Activated T-helper 2 cell treated with anti-CD3 and anti-CD28 coated beads, Interferon-gamma antibody, Interleukin-2, Interleukin-4, amounts not matched to agents 10 μg/mL and 5 μg/mL and 100 μg/mL, durations not matched to agents 14 hours and 24 hours and 36 hours (primary cell): ENCODE measurements at regions of chr2 and their contacts with region 1.

Region 1: DNA sequence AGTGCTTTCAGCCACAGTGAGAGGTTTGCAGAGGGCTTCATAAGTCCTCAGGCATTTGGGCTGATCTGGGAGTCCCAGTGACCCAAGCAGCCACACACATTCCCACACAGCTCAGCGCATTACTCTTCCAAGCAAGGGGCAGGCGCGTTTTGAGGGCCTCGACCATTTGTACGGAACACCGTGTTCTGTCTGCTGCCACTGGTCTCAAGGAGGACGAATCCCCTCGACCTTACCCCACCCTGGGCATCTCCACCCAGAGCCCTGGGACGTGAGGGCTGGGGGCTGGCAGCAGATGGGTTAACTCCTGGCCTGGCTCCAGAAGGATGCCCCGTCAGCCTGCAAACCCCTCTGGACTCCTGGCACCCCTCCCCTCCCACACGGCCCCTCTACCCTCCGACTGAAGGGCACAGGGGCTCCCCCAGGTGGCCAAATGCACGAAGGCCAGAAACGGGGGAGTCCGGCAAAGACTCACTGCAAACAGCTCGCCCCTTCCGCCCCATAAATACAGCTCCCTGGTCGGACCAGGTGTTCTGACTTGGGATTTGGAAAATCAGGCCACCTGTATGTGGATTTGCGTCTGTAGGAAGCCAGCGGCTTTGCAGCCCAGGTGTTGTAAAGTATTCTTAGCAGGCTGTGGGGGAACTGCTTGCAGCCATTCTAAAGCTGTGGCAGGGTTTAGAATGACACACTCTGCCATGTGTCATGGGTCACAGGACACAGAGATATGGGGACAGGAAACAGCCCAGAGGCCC is 33.6 kb upstream of the PTMA start:
- DNase-seq: peak; percentile 52
- H3K4me3 Mint-ChIP-seq: no peak overlapping the region
- H3K27ac Mint-ChIP-seq: peak overlapping the region; percentile 65
- H3K4me1 Mint-ChIP-seq: peaks cover 16% of the 10 kb centered on the region
- H3K27me3 Mint-ChIP-seq: no peaks in the 10 kb centered on the region

Region 2: GRCh38 chr2:231642631-231643494 is 31.9 kb before region 1 on chr2:
- intact Hi-C with region 1: loop called (anchors 2 kb)
- DNase-seq: peak; percentile 68
- H3K4me3 Mint-ChIP-seq: peak overlapping the region; percentile 68
- H3K27ac Mint-ChIP-seq: peak overlapping the region; percentile 91
- H3K4me1 Mint-ChIP-seq: peaks cover 14% of the 10 kb centered on the region
- H3K27me3 Mint-ChIP-seq: no peaks in the 10 kb centered on the region

Region 3: GRCh38 chr2:231715258-231715997 is 40.7 kb after region 1 on chr2:
- intact Hi-C with region 1: loop called (anchors 1 kb)
- DNase-seq: peak; percentile 70
- H3K4me3 Mint-ChIP-seq: no peak overlapping the region
- H3K27ac Mint-ChIP-seq: peak overlapping the region; percentile 95
- H3K4me1 Mint-ChIP-seq: peaks cover 34% of the 10 kb centered on the region
- H3K27me3 Mint-ChIP-seq: no peaks in the 10 kb centered on the region

Region 4: DNA sequence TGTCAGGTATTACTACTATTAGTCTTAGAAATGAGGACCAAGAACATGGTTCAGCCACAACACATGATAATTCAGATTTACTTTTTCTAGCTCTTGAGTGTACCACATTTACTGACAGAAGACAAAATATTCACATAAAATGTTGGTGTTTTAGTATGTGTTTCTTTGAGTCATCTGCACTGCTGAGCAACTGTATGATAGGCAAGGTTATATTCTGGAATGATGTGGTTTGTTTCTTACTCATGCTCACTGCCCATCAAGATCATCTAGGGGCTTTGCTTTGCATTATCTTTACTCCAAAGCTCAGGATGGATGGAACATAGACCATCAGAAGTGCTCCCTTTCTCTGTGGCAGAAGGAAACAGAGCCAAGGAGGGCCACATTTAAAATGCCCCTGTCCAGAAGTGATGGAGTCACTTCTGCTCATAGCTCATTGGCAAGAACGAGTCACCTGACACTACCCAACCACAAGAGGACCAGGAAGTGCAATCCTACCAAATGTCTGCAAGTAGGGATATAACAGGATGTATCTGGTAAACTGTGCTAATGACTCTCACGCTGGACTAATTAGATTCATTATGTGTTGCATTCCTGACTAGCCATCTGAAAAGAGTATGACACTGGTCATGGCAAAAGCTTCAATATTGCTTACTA is 368.3 kb after region 1 on chr2:
- intact Hi-C with region 1: no loop called
- DNase-seq: no peak
- H3K4me3 Mint-ChIP-seq: no peak overlapping the region
- H3K27ac Mint-ChIP-seq: no peak overlapping the region
- H3K4me1 Mint-ChIP-seq: peaks cover 5% of the 10 kb centered on the region
- H3K27me3 Mint-ChIP-seq: peaks cover 6% of the 10 kb centered on the region